Ovary (tissue), 10 donors: ENCODE measurements at regions of chr4 and their contacts with region 1.

Region 1: DNA sequence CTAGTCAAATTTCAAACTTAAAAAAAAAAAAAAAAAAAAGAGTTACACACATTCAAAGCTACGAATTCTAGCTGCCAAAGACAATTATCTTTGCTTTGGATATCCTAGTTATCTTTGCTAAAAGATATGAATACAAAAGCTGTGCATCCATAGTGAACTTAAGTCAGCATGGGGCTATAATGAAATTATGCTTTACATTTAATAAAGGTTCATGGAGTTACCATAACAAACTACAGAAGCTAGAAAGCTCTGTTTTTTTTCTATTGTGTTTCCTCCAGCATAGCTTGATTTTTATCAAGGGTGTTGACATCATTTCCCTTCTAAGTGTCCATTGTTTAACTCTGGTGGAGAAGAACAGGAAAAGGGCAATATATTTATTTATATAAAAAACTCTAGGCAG is 234.1 kb downstream of the ANKRD50 start:
- DNase-seq: no peak
- H3K4me3 ChIP-seq: no peak overlapping the region
- H3K27ac ChIP-seq: no peak overlapping the region
- H3K4me1 ChIP-seq: no peaks in the 10 kb centered on the region
- H3K27me3 ChIP-seq: no peaks in the 10 kb centered on the region
- CTCF ChIP-seq: no peak
- EP300 ChIP-seq: no peak
- POLR2A ChIP-seq: no peak

Region 2: DNA sequence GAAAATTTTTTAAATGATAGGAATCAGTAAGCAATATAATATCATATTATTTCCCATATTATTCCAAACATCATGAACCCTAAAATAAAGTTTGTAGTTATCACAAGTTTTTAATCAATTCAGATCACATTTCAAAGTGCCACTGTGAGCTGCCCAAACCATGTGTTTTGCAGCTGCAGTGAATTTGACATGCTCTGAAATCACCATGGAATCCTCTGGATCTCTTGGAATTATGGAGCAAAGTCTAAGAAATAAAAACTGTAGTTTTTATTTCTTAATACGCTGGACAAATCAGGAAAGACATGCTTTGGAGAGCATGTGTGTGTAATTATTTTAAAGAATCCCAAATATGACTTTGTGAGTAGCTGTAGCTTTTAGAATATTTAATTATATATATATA is 28.6 kb before region 1 on chr4:
- intact Hi-C with region 1: loop called in 1 of 4 experiments (anchors 2 kb)
- DNase-seq: no peak
- H3K4me3 ChIP-seq: no peak overlapping the region
- H3K27ac ChIP-seq: no peak overlapping the region
- H3K4me1 ChIP-seq: no peaks in the 10 kb centered on the region
- H3K27me3 ChIP-seq: no peaks in the 10 kb centered on the region
- CTCF ChIP-seq: no peak
- EP300 ChIP-seq: no peak
- POLR2A ChIP-seq: no peak